B cell (primary cell): ENCODE measurements at regions of chr14 and their contacts with region 1.

Region 1: DNA sequence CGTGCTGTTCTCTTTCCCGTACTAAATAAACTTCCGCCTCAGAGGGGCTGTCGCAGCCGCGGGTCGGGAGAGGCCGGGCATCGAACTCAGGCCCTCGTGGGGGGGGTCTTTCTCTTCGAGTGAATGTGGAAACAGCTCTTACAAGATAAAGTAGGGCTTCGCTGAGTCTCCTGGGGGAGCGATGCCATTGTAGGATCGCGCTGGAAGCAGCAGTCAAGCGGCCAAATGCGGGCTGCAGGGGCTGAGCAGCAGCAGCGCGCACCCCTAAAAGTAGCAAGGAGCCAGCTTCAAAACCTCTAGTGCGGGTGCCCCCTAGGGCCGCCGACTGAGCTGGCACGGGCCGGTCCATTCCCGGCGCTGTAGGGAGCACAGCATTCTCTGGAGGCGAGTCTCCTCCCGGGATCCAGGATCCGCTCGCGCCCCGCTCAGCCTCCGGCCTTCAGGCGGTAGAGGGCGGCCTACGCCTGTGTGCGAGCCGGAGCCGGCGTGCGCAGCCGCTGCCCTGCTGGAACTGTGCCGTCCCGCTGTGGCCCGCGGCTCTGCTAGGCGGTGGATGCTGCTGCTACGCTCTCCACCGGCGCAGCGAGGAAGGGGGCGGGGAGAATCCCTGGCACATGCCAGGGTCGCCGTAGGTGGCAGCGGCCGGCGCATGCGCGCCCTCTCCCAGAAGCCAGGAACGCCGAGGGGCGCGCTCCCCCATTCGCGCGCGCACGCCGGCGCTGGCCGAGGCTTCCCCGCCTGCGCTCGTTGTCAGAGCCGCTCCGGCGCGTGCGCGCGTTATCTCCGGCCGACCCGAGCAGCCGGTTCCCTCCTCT is at the start of gene FUT8:
- DNase-seq: peak; percentile 96
- ATAC-seq: peak; percentile 84
- H3K4me3 ChIP-seq: peak within 1 kb of the TSS; percentile 77 to 97 (median 95)
- H3K4me3 Mint-ChIP-seq: peak within 1 kb of the TSS; percentile 94
- H3K27ac ChIP-seq: peak within 1 kb of the TSS; percentile 81 to 82
- H3K27ac Mint-ChIP-seq: peak within 1 kb of the TSS; percentile 96
- H3K4me1 ChIP-seq: peaks cover 13 to 20% of the 10 kb centered on the region in 2 donors
- H3K4me1 Mint-ChIP-seq: peaks cover 43% of the 10 kb centered on the region
- H3K27me3 ChIP-seq: no peaks in the 10 kb centered on the region
- H3K27me3 Mint-ChIP-seq: no peaks in the 10 kb centered on the region
- CTCF ChIP-seq: peak; percentile 70
- total RNA-seq, gene FUT8: 91.8 and 94.6 TPM in 2 replicates

Region 2: GRCh38 chr14:64503478-64504309 is 908.5 kb before region 1 on chr14 and contains the start of gene ZBTB25:
- CTCF ChIA-PET with region 1: no interaction called
- POLR2A ChIA-PET with region 1: interaction called, 3 read pairs
- intact Hi-C with region 1: loop called (anchors 5 kb)
- DNase-seq: peak; percentile 99
- ATAC-seq: peak; percentile 64
- H3K4me3 ChIP-seq: peak within 1 kb of the TSS; percentile 87 to 98 (median 95)
- H3K4me3 Mint-ChIP-seq: peak within 1 kb of the TSS; percentile 95
- H3K27ac ChIP-seq: peak within 1 kb of the TSS; percentile 99 to 100
- H3K27ac Mint-ChIP-seq: peak within 1 kb of the TSS; percentile 100
- H3K4me1 ChIP-seq: peaks cover 63 to 65% of the 10 kb centered on the region in 2 donors
- H3K4me1 Mint-ChIP-seq: peaks cover 61% of the 10 kb centered on the region
- H3K27me3 ChIP-seq: no peaks in the 10 kb centered on the region
- H3K27me3 Mint-ChIP-seq: no peaks in the 10 kb centered on the region
- CTCF ChIP-seq: no peak
- total RNA-seq, gene ZBTB25: 45.7 and 51.0 TPM in 2 replicates

Region 3: GRCh38 chr14:65206448-65207096 is 205.7 kb before region 1 on chr14:
- CTCF ChIA-PET with region 1: interaction called, 33 read pairs
- POLR2A ChIA-PET with region 1: interaction called, 16 read pairs
- intact Hi-C with region 1: loop called (anchors 1 kb)
- DNase-seq: peak; percentile 82
- ATAC-seq: peak; percentile 59
- H3K4me3 ChIP-seq: peak overlapping the region in 4 of 5 experiments; percentile 1 to 41 (median 24)
- H3K4me3 Mint-ChIP-seq: peak overlapping the region; percentile 79
- H3K27ac ChIP-seq: peak overlapping the region; percentile 91
- H3K27ac Mint-ChIP-seq: peak overlapping the region; percentile 90
- H3K4me1 ChIP-seq: peaks cover 86 to 88% of the 10 kb centered on the region in 2 donors
- H3K4me1 Mint-ChIP-seq: peaks cover 82% of the 10 kb centered on the region
- H3K27me3 ChIP-seq: no peaks in the 10 kb centered on the region
- H3K27me3 Mint-ChIP-seq: no peaks in the 10 kb centered on the region
- CTCF ChIP-seq: no peak

Region 4: GRCh38 chr14:65281991-65282895 is 130.0 kb before region 1 on chr14:
- CTCF ChIA-PET with region 1: interaction called, 153 read pairs
- POLR2A ChIA-PET with region 1: interaction called, 51 read pairs
- intact Hi-C with region 1: loop called (anchors 1 kb)
- DNase-seq: peak; percentile 47
- ATAC-seq: peak; percentile 11
- H3K4me3 ChIP-seq: peak overlapping the region in 4 of 5 experiments; percentile 1 to 54 (median 38)
- H3K4me3 Mint-ChIP-seq: peak overlapping the region; percentile 85
- H3K27ac ChIP-seq: peak overlapping the region; percentile 60 to 83
- H3K27ac Mint-ChIP-seq: peak overlapping the region; percentile 91
- H3K4me1 ChIP-seq: peaks cover 47 to 48% of the 10 kb centered on the region in 2 donors
- H3K4me1 Mint-ChIP-seq: peaks cover 58% of the 10 kb centered on the region
- H3K27me3 ChIP-seq: no peaks in the 10 kb centered on the region
- H3K27me3 Mint-ChIP-seq: no peaks in the 10 kb centered on the region
- CTCF ChIP-seq: no peak

Region 5: GRCh38 chr14:65356327-65356852 is 55.8 kb before region 1 on chr14:
- CTCF ChIA-PET with region 1: interaction called, 10 read pairs
- POLR2A ChIA-PET with region 1: interaction called, 13 read pairs
- intact Hi-C with region 1: loop called (anchors 1 kb)
- DNase-seq: no peak
- ATAC-seq: no peak
- H3K4me3 ChIP-seq: no peak overlapping the region
- H3K4me3 Mint-ChIP-seq: no peak overlapping the region
- H3K27ac ChIP-seq: peak overlapping the region; percentile 40 to 61
- H3K27ac Mint-ChIP-seq: peak overlapping the region; percentile 79
- H3K4me1 ChIP-seq: peaks cover 58 to 84% of the 10 kb centered on the region in 2 donors
- H3K4me1 Mint-ChIP-seq: peaks cover 73% of the 10 kb centered on the region
- H3K27me3 ChIP-seq: no peaks in the 10 kb centered on the region
- H3K27me3 Mint-ChIP-seq: no peaks in the 10 kb centered on the region
- CTCF ChIP-seq: no peak

Region 6: DNA sequence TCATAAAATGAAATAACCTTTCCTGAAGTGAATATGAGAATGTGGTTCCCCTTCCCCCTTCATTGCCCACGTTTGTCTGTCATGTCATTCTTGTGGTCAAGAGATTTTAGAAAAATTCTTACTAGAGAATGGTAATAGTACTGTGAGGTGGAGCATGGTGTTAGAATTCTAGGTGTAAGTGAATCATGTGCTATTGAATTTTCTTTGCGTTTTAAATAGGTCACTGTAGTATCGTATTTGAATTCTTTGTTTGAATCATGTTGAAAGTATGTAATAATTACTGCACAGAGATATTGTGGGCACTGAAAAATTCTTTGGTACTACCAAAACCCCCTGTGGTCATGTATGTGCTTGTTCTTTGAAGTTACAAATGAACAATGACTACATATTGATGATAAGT is 50.2 kb after region 1 on chr14:
- CTCF ChIA-PET with region 1: interaction called, 4 read pairs
- POLR2A ChIA-PET with region 1: no interaction called
- intact Hi-C with region 1: loop called (anchors 5 kb)
- DNase-seq: no peak
- ATAC-seq: no peak
- H3K4me3 ChIP-seq: no peak overlapping the region
- H3K4me3 Mint-ChIP-seq: peak overlapping the region; percentile 49
- H3K27ac ChIP-seq: peak overlapping the region in 1 of 2 donors; percentile 70
- H3K27ac Mint-ChIP-seq: peak overlapping the region; percentile 54
- H3K4me1 ChIP-seq: peaks cover 16 to 22% of the 10 kb centered on the region in 2 donors
- H3K4me1 Mint-ChIP-seq: peaks cover 53% of the 10 kb centered on the region
- H3K27me3 ChIP-seq: no peaks in the 10 kb centered on the region
- H3K27me3 Mint-ChIP-seq: no peaks in the 10 kb centered on the region
- CTCF ChIP-seq: no peak

Region 7: DNA sequence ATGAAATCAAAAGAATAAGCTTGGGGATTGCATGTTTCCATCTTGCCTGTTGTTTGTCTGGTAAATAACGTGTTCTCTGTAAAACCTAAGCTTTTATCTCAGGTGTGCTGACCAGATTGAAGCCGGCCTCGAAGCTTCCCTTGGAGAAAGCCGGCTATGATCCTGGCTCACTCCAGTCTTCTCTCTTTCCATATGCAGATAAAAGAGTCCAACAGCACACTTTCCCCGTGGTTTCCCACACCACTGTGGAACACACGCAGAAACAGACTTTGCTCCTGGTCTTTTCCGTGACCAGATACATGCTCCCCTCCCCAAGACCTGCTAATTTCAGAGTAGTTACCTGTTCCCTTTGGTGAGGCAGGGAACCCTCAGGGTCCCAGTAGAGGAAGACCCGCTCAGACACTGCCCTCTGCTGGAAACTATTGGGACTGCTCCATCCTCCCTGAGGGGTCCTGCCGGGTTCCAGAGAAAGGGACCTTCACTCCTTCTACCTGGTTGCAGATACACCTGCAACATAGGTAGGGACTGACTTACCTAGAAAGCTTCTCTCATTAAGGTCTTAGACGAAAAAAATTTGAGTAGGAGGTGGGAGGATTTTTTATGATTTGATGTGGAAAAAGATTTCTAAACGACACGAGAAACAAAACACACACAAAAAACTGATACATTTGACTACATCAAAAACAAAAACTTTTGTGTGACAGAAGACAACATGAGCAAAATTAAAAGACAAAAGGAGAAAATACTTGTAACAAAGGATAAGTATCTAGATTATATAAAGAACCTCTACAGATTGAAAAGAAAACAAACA is 658.5 kb after region 1 on chr14:
- CTCF ChIA-PET with region 1: interaction called, 45 read pairs
- POLR2A ChIA-PET with region 1: no interaction called
- intact Hi-C with region 1: no loop called
- DNase-seq: peak; percentile 64
- ATAC-seq: peak; percentile 71
- H3K4me3 ChIP-seq: no peak overlapping the region
- H3K4me3 Mint-ChIP-seq: no peak overlapping the region
- H3K27ac ChIP-seq: no peak overlapping the region
- H3K27ac Mint-ChIP-seq: no peak overlapping the region
- H3K4me1 ChIP-seq: no peaks in the 10 kb centered on the region
- H3K4me1 Mint-ChIP-seq: no peaks in the 10 kb centered on the region
- H3K27me3 ChIP-seq: peaks cover 0 to 4% (median 0%) of the 10 kb centered on the region in 4 experiments
- H3K27me3 Mint-ChIP-seq: peaks cover 16% of the 10 kb centered on the region
- CTCF ChIP-seq: peak; percentile 94